GM23248 (cell line): ENCODE measurements at regions of chr14 and their contacts with region 1.

Region 1: GRCh38 chr14:102917469-102918211 is 4.8 kb upstream of the AMN start:
- DNase-seq: peak; percentile 62
- H3K4me3 ChIP-seq: no peak overlapping the region
- H3K27ac ChIP-seq: no peak overlapping the region
- H3K4me1 ChIP-seq: no peaks in the 10 kb centered on the region
- H3K27me3 ChIP-seq: peaks cover 5% of the 10 kb centered on the region

Region 2: DNA sequence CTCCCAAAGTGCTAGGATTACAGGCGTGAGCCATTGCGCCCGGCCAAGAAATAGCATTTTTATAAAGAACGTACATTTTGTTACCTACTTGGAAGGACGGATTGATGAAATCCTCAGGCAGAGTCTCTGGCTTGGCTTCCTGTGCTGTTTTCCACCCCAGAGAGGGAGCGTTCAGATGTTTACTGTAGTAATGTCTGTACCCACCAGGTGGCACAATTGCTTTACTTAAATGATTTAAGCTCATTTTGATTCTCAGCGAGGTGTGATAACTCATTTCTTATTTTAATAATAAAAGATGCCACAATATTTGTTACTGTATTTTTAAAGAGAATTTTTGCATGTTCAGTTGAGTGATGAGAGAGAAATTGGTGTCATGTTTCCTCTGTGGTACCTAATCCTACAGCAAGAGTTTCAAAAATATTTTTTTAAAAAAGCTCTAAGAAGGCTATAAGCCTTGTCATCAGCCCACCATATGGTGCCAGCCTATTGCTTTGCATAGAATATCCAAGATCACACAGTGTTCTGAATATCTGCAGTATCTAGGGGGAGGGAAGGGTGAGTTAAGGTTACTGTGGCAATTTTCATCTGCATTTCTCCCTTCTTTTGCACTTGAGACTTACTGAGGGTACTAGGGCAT is 223.0 kb before region 1 on chr14:
- in situ Hi-C with region 1: loop called (anchors 10 kb)
- DNase-seq: peak; percentile 80
- H3K4me3 ChIP-seq: no peak overlapping the region
- H3K27ac ChIP-seq: no peak overlapping the region
- H3K4me1 ChIP-seq: peaks cover 18% of the 10 kb centered on the region
- H3K27me3 ChIP-seq: no peaks in the 10 kb centered on the region

Region 3: GRCh38 chr14:102774391-102775153 is 143.1 kb before region 1 on chr14:
- in situ Hi-C with region 1: loop called (anchors 10 kb)
- DNase-seq: peak; percentile 88
- H3K4me3 ChIP-seq: no peak overlapping the region
- H3K27ac ChIP-seq: peak overlapping the region; percentile 34
- H3K4me1 ChIP-seq: peaks cover 16% of the 10 kb centered on the region
- H3K27me3 ChIP-seq: no peaks in the 10 kb centered on the region